SK-N-SH (cell line): ENCODE measurements at regions of chr14 and their contacts with region 1.

Region 1: GRCh38 chr14:104999361-104999760 is 13.8 kb downstream of the CLBA1 start:
- DNase-seq: no peak
- H3K4me3 ChIP-seq: no peak overlapping the region
- H3K27ac ChIP-seq: no peak overlapping the region
- H3K4me1 ChIP-seq: no peaks in the 10 kb centered on the region
- H3K27me3 ChIP-seq: no peaks in the 10 kb centered on the region
- CTCF ChIP-seq: no peak
- EP300 ChIP-seq: no peak
- RAD21 ChIP-seq: no peak

Region 2: DNA sequence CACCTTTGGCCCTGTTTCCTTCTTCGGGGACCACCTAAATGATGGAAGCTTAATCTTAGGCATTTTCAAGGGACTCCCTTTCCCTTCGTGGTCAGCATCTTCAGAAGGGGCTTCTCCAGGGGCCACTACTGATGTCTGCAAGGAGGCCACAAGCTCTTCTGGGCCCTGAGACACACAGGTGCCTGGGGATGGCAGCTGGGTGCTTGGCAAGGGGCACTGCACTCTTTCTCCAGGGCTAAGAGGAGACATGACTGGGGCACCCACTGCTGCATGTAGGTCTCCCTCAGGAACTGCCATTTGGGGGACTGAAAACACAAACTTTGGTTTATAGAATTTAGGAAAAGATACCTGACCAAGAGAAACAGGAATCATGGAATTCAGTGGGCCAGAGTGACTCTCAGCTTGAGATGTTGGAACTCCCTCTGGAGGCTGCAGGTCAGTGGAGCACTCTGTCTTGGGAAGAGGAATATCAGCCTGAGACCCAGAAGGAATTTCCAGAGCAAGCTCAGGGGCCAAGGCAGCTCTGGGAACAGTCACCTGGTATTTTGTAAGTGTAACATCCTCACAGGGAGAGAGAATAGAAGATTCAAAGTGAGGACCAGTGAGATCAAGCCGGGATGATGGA is 58.7 kb before region 1 on chr14:
- CTCF ChIA-PET with region 1: no interaction called
- POLR2A ChIA-PET with region 1: no interaction called
- DNase-seq: no peak
- H3K4me3 ChIP-seq: no peak overlapping the region
- H3K27ac ChIP-seq: no peak overlapping the region
- H3K4me1 ChIP-seq: no peaks in the 10 kb centered on the region
- H3K27me3 ChIP-seq: no peaks in the 10 kb centered on the region
- CTCF ChIP-seq: no peak
- EP300 ChIP-seq: no peak
- RAD21 ChIP-seq: peak; percentile 8; the same call in 1 of the 2 replicates

Region 3: GRCh38 chr14:105012171-105012985 is 13.0 kb after region 1 on chr14:
- CTCF ChIA-PET with region 1: interaction called, 21 read pairs
- POLR2A ChIA-PET with region 1: interaction called, 3 read pairs
- DNase-seq: peak; percentile 72
- H3K4me3 ChIP-seq: no peak overlapping the region
- H3K27ac ChIP-seq: peak overlapping the region in 1 of 2 experiments; percentile 39; a peak in 1 of 4 replicates
- H3K4me1 ChIP-seq: peaks cover 33 to 47% of the 10 kb centered on the region in 2 experiments
- H3K27me3 ChIP-seq: no peaks in the 10 kb centered on the region
- CTCF ChIP-seq: peak; percentile 67
- EP300 ChIP-seq: no peak
- RAD21 ChIP-seq: peak; percentile 37; the same call in 1 of the 2 replicates